ENCODE measurements at regions of chr12 and their contacts with region 1.

Region 1: DNA sequence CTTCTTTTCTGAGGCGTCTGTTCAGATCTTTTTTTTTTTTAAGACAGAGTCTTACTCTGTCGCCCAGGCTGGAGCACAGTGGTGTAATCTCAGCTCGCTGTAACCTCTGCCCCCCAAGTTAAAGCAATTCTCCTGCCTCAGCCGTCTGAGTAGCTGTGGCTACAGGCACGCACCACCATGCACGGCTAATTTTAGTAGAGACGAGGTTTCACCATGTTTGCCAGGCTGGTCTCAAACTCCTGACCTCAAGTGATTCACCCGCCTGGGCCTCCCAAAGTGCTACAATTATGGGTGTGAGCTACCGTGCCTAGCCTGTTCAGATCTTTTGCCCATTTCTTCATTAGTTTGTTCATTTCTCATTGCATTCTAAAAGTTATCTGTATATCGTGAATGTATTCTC is 55.1 kb upstream of the DBX2 start:
- DNase-seq: no peak
- ATAC-seq: no peak

Region 2: GRCh38 chr12:45177082-45177481 is 71.1 kb after region 1 on chr12:
- intact Hi-C with region 1: loop called (anchors 2 kb)
- DNase-seq: no peak
- ATAC-seq: no peak

Region 3: GRCh38 chr12:45557016-45557415 is 451.0 kb after region 1 on chr12:
- intact Hi-C with region 1: no loop called
- DNase-seq: no peak
- ATAC-seq: peak; percentile 39

Measured in sciatic nerve (tissue), 2 donors.